Activated T-helper 2 cell treated with anti-CD3 and anti-CD28 coated beads, Interferon-gamma antibody, Interleukin-2, Interleukin-4, amounts not matched to agents 10 μg/mL and 5 μg/mL and 100 μg/mL, durations not matched to agents 14 hours and 24 hours and 36 hours (primary cell): ENCODE measurements at regions of chr5 and their contacts with region 1.

Region 1: GRCh38 chr5:74640450-74640953 is at the start of gene ENC1:
- DNase-seq: peak; percentile 71
- H3K4me3 Mint-ChIP-seq: peak within 1 kb of the TSS; percentile 79
- H3K27ac Mint-ChIP-seq: no peak within 1 kb of the TSS
- H3K4me1 Mint-ChIP-seq: peaks cover 22% of the 10 kb centered on the region
- H3K27me3 Mint-ChIP-seq: peaks cover 81% of the 10 kb centered on the region
- total RNA-seq, gene ENC1: 0.87 and 1.2 TPM in 2 replicates

Region 2: GRCh38 chr5:74196233-74196632 is 444.3 kb before region 1 on chr5:
- intact Hi-C with region 1: loop called (anchors 5 kb)
- DNase-seq: no peak
- H3K4me3 Mint-ChIP-seq: no peak overlapping the region
- H3K27ac Mint-ChIP-seq: no peak overlapping the region
- H3K4me1 Mint-ChIP-seq: peaks cover 45% of the 10 kb centered on the region
- H3K27me3 Mint-ChIP-seq: peaks cover 22% of the 10 kb centered on the region

Region 3: DNA sequence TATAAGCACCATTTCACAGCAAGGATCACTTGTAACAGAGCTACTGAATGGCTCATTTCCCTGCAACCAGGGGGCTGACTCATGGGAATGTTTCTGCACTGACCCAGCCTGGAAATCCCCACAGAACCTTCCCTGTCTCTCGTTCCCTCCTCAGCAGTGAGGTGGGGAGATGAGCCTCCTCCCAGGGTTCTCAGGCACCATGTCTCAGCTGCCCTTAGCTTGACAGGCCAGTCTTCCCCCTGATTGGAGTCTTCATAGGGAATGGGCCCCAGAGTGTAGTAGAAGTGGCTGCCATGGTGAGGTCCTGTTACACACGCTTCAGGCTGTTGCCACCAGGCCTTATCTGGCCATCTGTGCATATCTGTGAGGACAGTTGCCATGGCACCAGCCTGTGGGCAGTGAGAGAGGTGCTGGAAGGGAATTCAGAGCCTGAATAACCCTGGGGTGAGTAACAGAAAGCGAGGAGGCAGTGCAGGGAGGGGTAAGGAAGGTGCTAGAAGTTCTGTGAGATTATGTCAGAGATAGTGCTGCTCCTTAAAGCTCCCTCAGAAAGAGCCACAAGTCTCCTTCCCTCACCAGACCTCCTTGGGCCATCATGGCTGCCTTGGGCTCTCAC is 324.3 kb before region 1 on chr5:
- intact Hi-C with region 1: loop called (anchors 5 kb)
- DNase-seq: no peak
- H3K4me3 Mint-ChIP-seq: no peak overlapping the region
- H3K27ac Mint-ChIP-seq: no peak overlapping the region
- H3K4me1 Mint-ChIP-seq: peaks cover 6% of the 10 kb centered on the region
- H3K27me3 Mint-ChIP-seq: peaks cover 17% of the 10 kb centered on the region

Region 4: GRCh38 chr5:74394916-74395781 is 245.4 kb before region 1 on chr5:
- intact Hi-C with region 1: loop called (anchors 10 kb)
- DNase-seq: no peak
- H3K4me3 Mint-ChIP-seq: no peak overlapping the region
- H3K27ac Mint-ChIP-seq: no peak overlapping the region
- H3K4me1 Mint-ChIP-seq: peaks cover 11% of the 10 kb centered on the region
- H3K27me3 Mint-ChIP-seq: peaks cover 8% of the 10 kb centered on the region

Region 5: GRCh38 chr5:75648712-75649111 is 1008.2 kb after region 1 on chr5:
- intact Hi-C with region 1: no loop called
- DNase-seq: no peak
- H3K4me3 Mint-ChIP-seq: no peak overlapping the region
- H3K27ac Mint-ChIP-seq: no peak overlapping the region
- H3K4me1 Mint-ChIP-seq: peaks cover 4% of the 10 kb centered on the region
- H3K27me3 Mint-ChIP-seq: no peaks in the 10 kb centered on the region